GM12878 (cell line): ENCODE measurements at regions of chr2 and their contacts with region 1.

Region 1: DNA sequence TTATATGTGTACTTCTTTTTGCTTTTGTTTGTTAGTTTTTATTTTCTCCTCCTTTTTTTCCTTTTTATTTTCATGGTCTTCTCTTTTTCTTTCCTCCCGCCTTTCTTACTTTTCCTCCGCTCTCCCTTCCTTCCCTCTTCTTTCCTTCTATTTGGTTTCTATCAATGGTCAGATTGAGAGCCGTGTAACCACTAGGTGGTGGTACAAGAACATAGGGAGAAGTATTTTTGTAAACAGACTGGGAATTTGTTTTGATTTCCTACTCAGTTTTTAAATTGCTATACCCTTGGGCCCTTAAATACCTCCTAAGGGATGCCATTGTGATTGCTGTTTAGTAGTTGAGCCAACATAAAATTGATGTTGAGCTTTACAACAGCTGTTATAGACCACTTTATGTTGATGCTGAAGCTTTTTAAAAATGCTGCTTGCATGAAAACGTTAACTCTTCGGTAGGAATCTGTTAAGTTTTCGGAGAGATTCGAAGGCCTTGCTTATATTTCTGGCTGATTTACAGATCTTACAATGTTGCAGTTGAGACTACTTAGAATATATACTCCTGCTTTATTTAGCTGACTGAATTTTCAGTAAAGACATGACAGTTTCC is 124.2 kb downstream of the UBE2E3 start:
- DNase-seq: no peak
- ATAC-seq: no peak; the same call in 2 of the 3 replicates
- H3K4me3 ChIP-seq: no peak overlapping the region
- H3K27ac ChIP-seq: peak overlapping the region; percentile 4; the same call in 1 of the 2 replicates
- H3K4me1 ChIP-seq: peaks cover 25% of the 10 kb centered on the region
- H3K27me3 ChIP-seq: no peaks in the 10 kb centered on the region
- CTCF ChIP-seq: peak; percentile 63 to 67 (median 65)
- EP300 ChIP-seq: no peak
- POLR2A ChIP-seq: no peak
- RAD21 ChIP-seq: peak; percentile 100

Region 2: GRCh38 chr2:181063696-181064095 is 40.9 kb before region 1 on chr2:
- CTCF ChIA-PET with region 1: no interaction called
- POLR2A ChIA-PET with region 1: no interaction called
- RAD21 ChIA-PET with region 1: no interaction called
- SMC1A ChIA-PET with region 1: no interaction called
- in situ Hi-C with region 1: no loop called
- intact Hi-C with region 1: no loop called
- DNase-seq: no peak
- ATAC-seq: no peak
- H3K4me3 ChIP-seq: no peak overlapping the region
- H3K27ac ChIP-seq: no peak overlapping the region
- H3K4me1 ChIP-seq: no peaks in the 10 kb centered on the region
- H3K27me3 ChIP-seq: no peaks in the 10 kb centered on the region
- CTCF ChIP-seq: no peak
- EP300 ChIP-seq: no peak
- POLR2A ChIP-seq: no peak
- RAD21 ChIP-seq: no peak

Region 3: GRCh38 chr2:181123798-181124231 is 19.2 kb after region 1 on chr2:
- CTCF ChIA-PET with region 1: interaction called, 16 read pairs
- POLR2A ChIA-PET with region 1: no interaction called
- RAD21 ChIA-PET with region 1: interaction called, 12 read pairs
- SMC1A ChIA-PET with region 1: interaction called, 30 read pairs
- in situ Hi-C with region 1: no loop called
- intact Hi-C with region 1: loop called (anchors 1 kb)
- DNase-seq: peak; percentile 53
- ATAC-seq: peak; percentile 94
- H3K4me3 ChIP-seq: peak overlapping the region; percentile 53; the same call in 1 of the 2 replicates
- H3K27ac ChIP-seq: peak overlapping the region; percentile 81
- H3K4me1 ChIP-seq: peaks cover 14% of the 10 kb centered on the region
- H3K27me3 ChIP-seq: no peaks in the 10 kb centered on the region; a peak in 1 of 4 replicates
- CTCF ChIP-seq: no peak
- EP300 ChIP-seq: peak; percentile 77 to 86; a peak in 3 of 4 replicates
- POLR2A ChIP-seq: no peak
- RAD21 ChIP-seq: 0 out of 2 replicates have a peak, but pooled peaks have one; percentile 10

Region 4: GRCh38 chr2:181183878-181184542 is 79.4 kb after region 1 on chr2:
- CTCF ChIA-PET with region 1: interaction called, 10 read pairs
- POLR2A ChIA-PET with region 1: no interaction called
- RAD21 ChIA-PET with region 1: interaction called, 11 read pairs
- SMC1A ChIA-PET with region 1: interaction called, 7 read pairs
- in situ Hi-C with region 1: no loop called
- intact Hi-C with region 1: no loop called
- DNase-seq: no peak
- ATAC-seq: peak; percentile 99
- H3K4me3 ChIP-seq: no peak overlapping the region
- H3K27ac ChIP-seq: no peak overlapping the region
- H3K4me1 ChIP-seq: peaks cover 11% of the 10 kb centered on the region; the same call in 1 of the 2 replicates
- H3K27me3 ChIP-seq: no peaks in the 10 kb centered on the region
- CTCF ChIP-seq: no peak
- EP300 ChIP-seq: 0 out of 4 replicates have a peak, but pooled peaks of 1 of the 2 experiments have one; percentile 33
- POLR2A ChIP-seq: no peak
- RAD21 ChIP-seq: no peak

Region 5: GRCh38 chr2:181312515-181312927 is 207.9 kb after region 1 on chr2:
- CTCF ChIA-PET with region 1: interaction called, 13 read pairs
- POLR2A ChIA-PET with region 1: interaction called, 4 read pairs
- RAD21 ChIA-PET with region 1: interaction called, 40 read pairs
- SMC1A ChIA-PET with region 1: interaction called, 14 read pairs
- in situ Hi-C with region 1: no loop called
- intact Hi-C with region 1: no loop called
- DNase-seq: peak; percentile 99
- ATAC-seq: peak; percentile 87
- H3K4me3 ChIP-seq: 0 out of 2 replicates have a peak overlapping the region, but pooled peaks have one; percentile 6
- H3K27ac ChIP-seq: peak overlapping the region; percentile 99
- H3K4me1 ChIP-seq: peaks cover 49% of the 10 kb centered on the region
- H3K27me3 ChIP-seq: no peaks in the 10 kb centered on the region
- CTCF ChIP-seq: no peak
- EP300 ChIP-seq: peak; percentile 69 to 90; a peak in 3 of 4 replicates
- POLR2A ChIP-seq: peak; percentile 58
- RAD21 ChIP-seq: peak; percentile 35

Region 6: DNA sequence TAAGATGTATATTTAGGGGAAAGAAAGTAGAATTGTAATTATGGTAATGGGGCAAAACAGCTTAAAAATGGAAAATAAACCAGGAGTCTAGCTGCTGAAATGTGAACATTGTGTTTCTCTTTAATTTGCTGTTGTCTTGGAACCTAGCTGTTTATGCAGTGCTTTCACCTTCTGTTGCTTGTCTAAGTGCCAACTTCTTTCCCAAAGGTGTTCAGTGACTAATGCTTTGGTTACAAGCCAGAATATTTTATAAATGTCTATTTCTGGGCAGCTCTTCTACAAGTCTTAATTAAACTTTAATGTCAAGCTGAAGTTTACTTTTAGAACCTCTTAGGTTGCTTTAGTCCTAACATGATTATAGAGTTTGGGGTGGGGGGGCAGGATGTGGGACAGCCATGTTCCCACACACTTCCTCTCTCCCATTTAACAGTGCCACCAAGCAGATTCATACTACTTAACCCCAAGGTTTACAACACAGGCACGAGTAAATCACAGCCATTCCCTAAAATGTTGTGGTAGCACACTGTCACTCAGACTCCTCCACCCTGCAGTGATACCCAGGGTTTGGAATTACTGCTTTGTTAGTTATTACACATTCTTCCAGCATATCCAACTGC is 413.2 kb after region 1 on chr2:
- CTCF ChIA-PET with region 1: interaction called, 10 read pairs
- POLR2A ChIA-PET with region 1: no interaction called
- RAD21 ChIA-PET with region 1: no interaction called
- SMC1A ChIA-PET with region 1: interaction called, 5 read pairs
- in situ Hi-C with region 1: no loop called
- intact Hi-C with region 1: no loop called
- DNase-seq: no peak
- ATAC-seq: no peak
- H3K4me3 ChIP-seq: no peak overlapping the region
- H3K27ac ChIP-seq: no peak overlapping the region
- H3K4me1 ChIP-seq: no peaks in the 10 kb centered on the region
- H3K27me3 ChIP-seq: no peaks in the 10 kb centered on the region
- CTCF ChIP-seq: no peak
- EP300 ChIP-seq: no peak
- POLR2A ChIP-seq: no peak
- RAD21 ChIP-seq: no peak

Region 7: GRCh38 chr2:181904022-181904632 is 799.5 kb after region 1 on chr2:
- CTCF ChIA-PET with region 1: interaction called, 3 read pairs
- POLR2A ChIA-PET with region 1: no interaction called
- RAD21 ChIA-PET with region 1: no interaction called
- SMC1A ChIA-PET with region 1: no interaction called
- in situ Hi-C with region 1: no loop called
- intact Hi-C with region 1: loop called (anchors 10 kb)
- DNase-seq: no peak
- ATAC-seq: peak; percentile 85
- H3K4me3 ChIP-seq: no peak overlapping the region
- H3K27ac ChIP-seq: no peak overlapping the region
- H3K4me1 ChIP-seq: peaks cover 20% of the 10 kb centered on the region; the same call in 1 of the 2 replicates
- H3K27me3 ChIP-seq: no peaks in the 10 kb centered on the region
- CTCF ChIP-seq: peak; percentile 56
- EP300 ChIP-seq: no peak
- POLR2A ChIP-seq: no peak
- RAD21 ChIP-seq: peak; percentile 60